GM18951 (cell line): ENCODE measurements at regions of chr5 and their contacts with region 1.

Region 1: GRCh38 chr5:39080597-39081204 is 6.5 kb upstream of the RICTOR start:
- POLR2A ChIP-seq: no peak

Region 2: GRCh38 chr5:38441453-38442246 is 639.1 kb before region 1 on chr5:
- in situ Hi-C with region 1: loop called (anchors 25 kb)
- POLR2A ChIP-seq: no peak

Region 3: DNA sequence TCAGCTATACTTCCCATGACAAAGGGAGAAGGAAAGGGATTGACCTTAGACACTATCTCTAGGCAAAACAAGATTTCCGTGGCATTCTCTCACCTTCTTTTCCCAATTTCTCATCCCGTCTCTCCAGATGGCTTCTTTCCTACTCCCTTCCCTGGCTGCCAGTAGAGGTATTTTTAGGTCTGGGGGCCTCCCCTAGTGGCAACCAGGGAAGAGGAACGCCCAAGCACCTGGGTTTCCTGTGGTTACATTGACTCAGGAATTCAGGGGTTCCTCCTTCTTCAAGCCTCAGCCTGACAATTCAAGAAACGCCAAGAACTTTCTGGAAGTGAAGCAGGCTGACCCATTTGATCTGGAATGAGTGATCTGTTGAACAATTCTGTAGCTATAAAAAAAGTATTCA is 346.3 kb before region 1 on chr5:
- in situ Hi-C with region 1: no loop called
- POLR2A ChIP-seq: no peak

Region 4: GRCh38 chr5:38845526-38846378 is 234.9 kb before region 1 on chr5 and contains the start of gene OSMR:
- in situ Hi-C with region 1: loop called (anchors 25 kb)
- POLR2A ChIP-seq: no peak